H1 (cell line): ENCODE measurements at regions of chr10 and their contacts with region 1.

Region 1: DNA sequence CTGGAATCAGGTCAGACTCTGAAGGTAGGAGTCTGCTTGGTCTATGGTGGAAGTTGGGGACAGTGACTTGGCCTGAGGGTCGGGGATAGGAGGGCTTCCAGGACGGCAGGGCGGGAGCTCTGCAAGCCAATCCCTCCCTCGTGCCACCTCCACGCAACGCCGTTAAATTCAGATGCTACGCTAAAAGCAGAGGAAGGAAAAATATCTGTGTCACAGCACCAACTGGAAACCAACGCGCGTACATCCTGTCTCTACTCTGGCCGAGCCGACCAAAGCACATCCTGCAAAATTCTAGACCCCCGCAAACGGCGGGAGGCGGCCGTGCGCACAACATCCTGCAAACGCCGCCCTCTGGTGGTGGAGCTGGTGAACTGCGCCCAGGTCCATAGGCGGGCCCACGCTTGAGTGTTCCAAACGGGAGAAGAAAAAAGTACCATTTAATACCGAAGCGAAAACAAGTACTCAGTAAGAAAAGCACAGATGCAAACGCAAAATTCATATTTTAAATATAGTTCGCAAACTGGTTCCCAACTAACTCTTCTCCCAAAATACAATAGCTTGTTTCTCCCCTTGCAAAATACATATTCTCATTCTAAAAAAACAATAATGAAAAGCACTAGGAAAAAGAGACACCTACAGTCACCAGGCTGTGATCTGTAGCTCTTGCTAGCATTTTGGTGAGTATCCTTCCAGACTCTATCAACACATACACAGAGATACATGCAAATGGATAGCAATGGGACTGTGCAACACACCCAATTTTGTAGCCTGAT is 45.7 kb upstream of the HSPA12A start:
- DNase-seq: peak; percentile 61 to 98
- H3K4me3 ChIP-seq: peak overlapping the region in 3 of 4 experiments; percentile 7 to 41 (median 23); a peak in 5 of 8 replicates
- H3K27ac ChIP-seq: no peak overlapping the region
- H3K4me1 ChIP-seq: peaks cover 0 to 4% (median 3%) of the 10 kb centered on the region in 4 experiments; a peak in 5 of 7 replicates
- H3K27me3 ChIP-seq: no peaks in the 10 kb centered on the region
- CTCF ChIP-seq: peak; percentile 92 to 97 (median 94)
- EP300 ChIP-seq: no peak
- POLR2A ChIP-seq: no peak
- RAD21 ChIP-seq: peak; percentile 89 to 91

Region 2: DNA sequence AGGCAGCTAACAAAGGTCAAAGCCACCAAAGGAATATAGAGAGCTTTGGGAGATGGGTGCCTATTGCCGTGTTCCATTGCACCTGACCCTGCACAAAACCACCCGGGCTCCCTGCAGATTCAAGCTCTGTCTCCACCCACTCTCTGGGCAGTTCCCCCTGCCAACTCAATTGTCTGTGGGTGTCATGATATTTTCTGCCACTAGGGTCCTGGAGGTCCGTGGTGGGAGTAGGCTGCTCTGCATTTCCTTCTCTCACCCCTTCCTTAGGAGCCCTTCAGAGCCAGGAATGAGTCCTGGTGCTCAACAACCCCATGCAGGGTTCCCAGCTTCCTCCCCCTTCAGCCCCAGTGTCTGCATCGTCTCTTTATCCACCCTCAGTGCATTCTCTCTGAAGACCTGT is 133.3 kb before region 1 on chr10:
- CTCF ChIA-PET with region 1: interaction called, 14 read pairs
- POLR2A ChIA-PET with region 1: no interaction called
- DNase-seq: no peak
- H3K4me3 ChIP-seq: no peak overlapping the region
- H3K27ac ChIP-seq: no peak overlapping the region
- H3K4me1 ChIP-seq: no peaks in the 10 kb centered on the region
- H3K27me3 ChIP-seq: no peaks in the 10 kb centered on the region
- CTCF ChIP-seq: peak; percentile 43 to 66 (median 47)
- EP300 ChIP-seq: no peak
- POLR2A ChIP-seq: no peak
- RAD21 ChIP-seq: peak; percentile 37 to 42

Region 3: GRCh38 chr10:116690356-116691322 is 97.4 kb before region 1 on chr10:
- CTCF ChIA-PET with region 1: interaction called, 223 read pairs
- POLR2A ChIA-PET with region 1: interaction called, 3 read pairs
- DNase-seq: peak in 1 of 2 experiments; percentile 57
- H3K4me3 ChIP-seq: peak overlapping the region in 3 of 4 experiments; percentile 19 to 33 (median 21); a peak in 2 of 8 replicates
- H3K27ac ChIP-seq: no peak overlapping the region
- H3K4me1 ChIP-seq: peaks cover 4 to 17% (median 8%) of the 10 kb centered on the region in 4 experiments; a peak in 6 of 7 replicates
- H3K27me3 ChIP-seq: no peaks in the 10 kb centered on the region; a peak in 3 of 7 replicates
- CTCF ChIP-seq: peak; percentile 45 to 62 (median 46)
- EP300 ChIP-seq: no peak
- POLR2A ChIP-seq: no peak
- RAD21 ChIP-seq: peak; percentile 49 to 60

Region 4: DNA sequence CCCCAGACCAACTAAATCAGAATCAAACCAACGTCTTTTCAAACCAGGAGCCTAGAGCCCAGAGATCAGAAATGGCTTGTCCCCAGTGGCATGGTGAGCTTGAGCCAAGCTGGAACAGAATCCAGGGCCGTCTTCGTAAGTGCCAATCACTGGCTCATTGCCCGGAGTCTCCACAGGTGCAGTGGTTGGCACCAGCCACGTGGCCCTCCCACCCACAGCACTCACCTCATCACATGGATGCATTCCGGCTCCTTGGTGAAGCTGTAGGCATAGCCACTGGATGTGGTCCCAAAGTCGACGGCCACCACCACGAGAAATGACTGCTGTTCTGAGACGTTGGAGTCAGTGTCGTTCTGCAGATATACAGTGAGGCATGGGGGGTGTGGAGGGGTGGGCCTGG is 83.2 kb before region 1 on chr10:
- CTCF ChIA-PET with region 1: interaction called, 13 read pairs
- POLR2A ChIA-PET with region 1: no interaction called
- DNase-seq: no peak
- H3K4me3 ChIP-seq: no peak overlapping the region
- H3K27ac ChIP-seq: no peak overlapping the region
- H3K4me1 ChIP-seq: peaks cover 4 to 14% (median 10%) of the 10 kb centered on the region in 4 experiments
- H3K27me3 ChIP-seq: no peaks in the 10 kb centered on the region
- CTCF ChIP-seq: no peak
- EP300 ChIP-seq: no peak
- POLR2A ChIP-seq: no peak
- RAD21 ChIP-seq: no peak

Region 5: GRCh38 chr10:116765547-116766162 is 22.4 kb before region 1 on chr10:
- CTCF ChIA-PET with region 1: interaction called, 37 read pairs
- POLR2A ChIA-PET with region 1: no interaction called
- DNase-seq: peak in 1 of 2 experiments; percentile 78
- H3K4me3 ChIP-seq: no peak overlapping the region
- H3K27ac ChIP-seq: no peak overlapping the region
- H3K4me1 ChIP-seq: peaks cover 0 to 7% (median 0%) of the 10 kb centered on the region in 4 experiments; a peak in 2 of 7 replicates
- H3K27me3 ChIP-seq: no peaks in the 10 kb centered on the region; a peak in 1 of 7 replicates
- CTCF ChIP-seq: peak; percentile 71 to 78 (median 74)
- EP300 ChIP-seq: no peak
- POLR2A ChIP-seq: no peak
- RAD21 ChIP-seq: peak; percentile 66 to 69

Region 6: GRCh38 chr10:116836902-116837523 is 48.9 kb after region 1 on chr10:
- CTCF ChIA-PET with region 1: interaction called, 11 read pairs
- POLR2A ChIA-PET with region 1: no interaction called
- DNase-seq: no peak
- H3K4me3 ChIP-seq: no peak overlapping the region
- H3K27ac ChIP-seq: no peak overlapping the region
- H3K4me1 ChIP-seq: peaks cover 29 to 50% (median 41%) of the 10 kb centered on the region in 4 experiments
- H3K27me3 ChIP-seq: no peaks in the 10 kb centered on the region
- CTCF ChIP-seq: peak in 2 of 3 experiments; percentile 12 to 22; a peak in 2 of 4 replicates
- EP300 ChIP-seq: no peak
- POLR2A ChIP-seq: no peak
- RAD21 ChIP-seq: peak; percentile 54 to 61

Region 7: GRCh38 chr10:116878124-116878523 is 90.0 kb after region 1 on chr10:
- CTCF ChIA-PET with region 1: no interaction called
- POLR2A ChIA-PET with region 1: no interaction called
- DNase-seq: no peak
- H3K4me3 ChIP-seq: no peak overlapping the region
- H3K27ac ChIP-seq: no peak overlapping the region
- H3K4me1 ChIP-seq: peaks cover 0 to 14% (median 7%) of the 10 kb centered on the region in 4 experiments; a peak in 5 of 7 replicates
- H3K27me3 ChIP-seq: no peaks in the 10 kb centered on the region
- CTCF ChIP-seq: no peak
- EP300 ChIP-seq: no peak
- POLR2A ChIP-seq: no peak
- RAD21 ChIP-seq: no peak